Prostate gland (tissue), 2 donors: ENCODE measurements at regions of chr17 and their contacts with region 1.

Region 1: DNA sequence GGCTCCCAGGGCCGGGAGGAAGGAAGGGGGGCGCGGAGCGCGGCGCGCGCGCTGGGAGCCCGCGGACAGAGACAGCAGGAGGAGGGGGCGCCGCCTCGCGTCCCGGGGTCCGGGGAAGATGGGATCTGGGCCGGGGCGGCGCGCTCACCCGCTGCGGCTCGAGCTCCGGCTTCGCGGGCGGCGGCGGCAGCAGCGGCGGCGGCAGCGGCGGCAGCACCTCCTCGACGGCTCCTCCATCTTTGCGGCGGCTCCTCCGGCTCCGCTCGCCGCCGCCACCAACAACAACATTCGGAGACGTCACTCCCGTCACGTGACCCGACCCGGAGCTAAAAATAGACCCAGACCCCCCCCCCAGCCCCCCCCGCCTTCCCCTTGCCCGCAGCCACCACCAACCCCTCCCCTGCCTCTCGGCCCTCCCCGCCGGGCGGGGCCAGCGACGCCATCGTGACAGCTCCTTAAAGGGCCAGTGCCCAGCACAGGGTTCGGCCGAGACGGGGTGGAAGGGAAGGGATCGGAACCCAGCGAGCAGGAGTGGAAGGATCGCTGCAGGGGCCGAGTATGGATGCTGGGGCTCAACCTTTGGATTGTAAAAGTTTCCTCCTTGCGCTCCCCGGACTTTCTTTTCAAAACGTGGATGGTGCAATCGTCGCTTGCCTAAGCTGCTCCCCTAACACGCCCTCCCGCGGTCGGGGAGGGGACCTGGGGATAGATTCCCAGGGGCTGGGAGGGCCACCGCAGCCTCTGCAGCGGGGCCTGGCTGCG is at the start of gene HDAC5:
- DNase-seq: peak; percentile 95
- H3K4me3 ChIP-seq: peak within 1 kb of the TSS; percentile 97 to 99
- H3K27ac ChIP-seq: peak within 1 kb of the TSS; percentile 93 to 95
- H3K4me1 ChIP-seq: peaks cover 2% of the 10 kb centered on the region
- H3K27me3 ChIP-seq: no peaks in the 10 kb centered on the region
- CTCF ChIP-seq: peak; percentile 28 to 73 (median 58)
- POLR2A ChIP-seq: peak; percentile 89
- total RNA-seq, gene HDAC5: 71.2 to 145 TPM

Region 2: GRCh38 chr17:43868226-43868994 is 255.1 kb before region 1 on chr17:
- intact Hi-C with region 1: no loop called
- DNase-seq: no peak
- H3K4me3 ChIP-seq: no peak overlapping the region
- H3K27ac ChIP-seq: no peak overlapping the region
- H3K4me1 ChIP-seq: no peaks in the 10 kb centered on the region
- H3K27me3 ChIP-seq: no peaks in the 10 kb centered on the region
- CTCF ChIP-seq: no peak
- POLR2A ChIP-seq: no peak

Region 3: DNA sequence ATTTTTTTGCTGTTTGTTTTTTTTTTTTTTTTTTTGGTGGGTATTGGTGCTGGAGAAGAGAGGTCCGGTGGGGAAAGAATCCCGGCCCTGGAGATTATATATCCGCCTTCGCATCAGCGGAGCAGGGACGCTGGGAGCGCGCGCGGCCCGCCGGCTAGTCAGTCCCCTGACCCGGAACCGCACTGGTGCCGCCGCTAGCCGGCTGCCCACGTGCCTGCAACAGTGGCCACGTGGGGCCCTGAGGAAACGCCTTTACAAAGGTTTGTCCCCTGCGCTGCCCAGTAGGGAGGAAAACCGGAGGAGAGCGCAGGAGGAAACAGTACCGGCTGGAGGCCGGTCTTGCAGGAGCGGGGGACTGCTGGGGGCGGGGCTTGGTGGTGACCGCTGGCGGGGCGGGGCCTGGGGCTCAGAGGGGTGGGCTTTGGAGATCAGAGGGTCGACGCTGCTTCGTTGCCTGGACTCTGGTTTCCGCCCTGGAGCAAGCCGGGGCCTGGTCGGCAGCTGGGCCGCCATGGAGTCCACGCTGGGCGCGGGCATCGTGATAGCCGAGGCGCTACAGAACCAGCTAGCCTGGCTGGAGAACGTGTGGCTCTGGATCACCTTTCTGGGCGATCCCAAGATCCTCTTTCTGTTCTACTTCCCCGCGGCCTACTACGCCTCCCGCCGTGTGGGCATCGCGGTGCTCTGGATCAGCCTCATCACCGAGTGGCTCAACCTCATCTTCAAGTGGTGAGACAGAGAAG is 52.9 kb before region 1 on chr17 and contains the start of gene G6PC3:
- intact Hi-C with region 1: loop called (anchors 1 kb)
- DNase-seq: peak; percentile 95
- H3K4me3 ChIP-seq: peak within 1 kb of the TSS; percentile 52 to 75
- H3K27ac ChIP-seq: peak within 1 kb of the TSS; percentile 85 to 89
- H3K4me1 ChIP-seq: peaks cover 14% of the 10 kb centered on the region
- H3K27me3 ChIP-seq: no peaks in the 10 kb centered on the region
- CTCF ChIP-seq: peak in 2 of 4 experiments; percentile 22 to 49
- POLR2A ChIP-seq: peak; percentile 61
- total RNA-seq, gene G6PC3: 68.9 to 84.8 TPM